ENCODE measurements at regions of chr7 and their contacts with region 1.

Region 1: DNA sequence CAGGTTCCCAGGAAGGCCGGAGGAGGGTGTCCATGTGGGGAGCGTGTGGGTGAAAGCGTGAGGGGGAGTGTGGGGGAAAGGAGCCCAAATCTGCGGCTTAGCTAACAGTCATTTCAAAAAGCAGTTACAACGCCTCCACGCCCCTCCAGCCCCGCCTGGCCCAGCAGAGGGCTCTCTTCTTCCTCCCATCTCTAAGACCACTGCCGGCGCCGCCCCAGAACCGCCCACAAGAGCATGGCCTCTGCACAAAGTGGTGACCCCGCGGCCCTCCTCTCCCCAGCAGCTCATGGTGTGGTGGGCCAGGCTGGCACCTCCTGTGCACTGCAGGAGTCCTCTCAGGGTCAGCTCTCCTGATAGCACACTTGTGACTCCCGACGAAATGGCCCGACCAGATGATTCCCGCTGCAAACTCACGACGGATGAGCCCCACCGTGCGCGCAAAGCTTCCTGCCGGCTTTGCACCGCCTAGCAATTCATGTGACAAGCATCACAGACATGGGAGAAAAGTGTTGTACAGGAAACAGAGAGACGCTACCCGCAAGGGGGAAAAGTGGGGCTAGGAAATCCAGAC is 12.4 kb upstream of the HUS1 start:
- DNase-seq: no peak
- H3K4me3 ChIP-seq: peak overlapping the region; percentile 63
- CTCF ChIP-seq: peak; percentile 86

Region 2: DNA sequence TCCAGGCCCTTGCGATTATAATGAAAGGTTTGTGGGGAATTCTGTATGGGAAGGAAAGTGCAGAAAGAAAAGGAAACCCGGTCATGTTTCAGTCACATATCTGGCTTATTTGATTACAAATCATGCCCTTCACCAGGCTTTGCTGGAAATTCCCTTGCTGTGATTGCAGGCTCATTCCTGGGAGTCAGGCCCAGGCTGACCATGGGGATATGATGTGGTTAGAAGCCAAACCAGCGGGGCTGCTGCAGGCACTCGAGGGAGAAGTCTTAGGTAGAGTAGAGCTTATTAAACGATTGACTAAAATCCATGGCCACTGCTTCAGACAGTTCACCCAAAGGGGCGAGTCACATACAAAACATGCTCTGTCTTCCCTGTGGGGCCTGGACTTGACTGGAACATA is 59.8 kb before region 1 on chr7:
- CTCF ChIA-PET with region 1: no interaction called
- POLR2A ChIA-PET with region 1: no interaction called
- DNase-seq: no peak
- H3K4me3 ChIP-seq: no peak overlapping the region
- CTCF ChIP-seq: no peak

Region 3: DNA sequence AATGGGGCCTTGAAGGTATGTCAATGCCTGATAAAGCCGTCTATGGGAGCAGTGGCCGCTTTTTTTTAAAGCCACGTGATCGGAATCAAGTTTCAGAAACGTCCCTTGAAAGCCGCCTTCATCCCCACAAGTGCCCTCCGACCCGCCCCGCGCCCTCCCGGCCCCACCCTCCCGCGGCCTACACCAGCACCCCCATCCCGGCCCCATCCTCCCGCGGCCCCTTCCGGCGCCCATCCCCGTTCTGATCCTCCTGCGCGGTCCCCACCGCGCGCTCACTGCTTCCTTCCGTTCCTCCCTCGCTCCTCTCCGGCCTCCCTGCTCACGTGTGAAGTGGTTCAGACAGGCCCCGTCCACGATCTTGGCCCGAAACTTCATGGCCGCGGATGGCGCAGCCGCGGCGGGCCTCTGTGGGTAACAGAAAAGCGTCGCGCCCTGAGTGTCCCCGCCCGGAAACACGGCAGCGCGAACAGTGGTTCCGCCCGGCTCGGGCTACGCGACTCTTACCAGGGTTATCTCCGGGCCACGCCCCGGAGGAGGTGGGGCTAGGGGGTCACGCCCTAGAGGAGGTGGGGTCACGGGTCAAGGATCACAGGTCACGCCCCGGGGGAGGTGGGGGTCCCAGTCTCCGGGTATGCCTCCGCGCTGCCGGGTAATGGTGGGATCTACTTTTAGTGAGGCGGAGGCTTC is 12.5 kb before region 1 on chr7 and contains the start of gene HUS1:
- CTCF ChIA-PET with region 1: interaction called, 14 read pairs
- POLR2A ChIA-PET with region 1: no interaction called
- DNase-seq: no peak
- H3K4me3 ChIP-seq: peak within 1 kb of the TSS; percentile 78
- CTCF ChIP-seq: no peak

Region 4: DNA sequence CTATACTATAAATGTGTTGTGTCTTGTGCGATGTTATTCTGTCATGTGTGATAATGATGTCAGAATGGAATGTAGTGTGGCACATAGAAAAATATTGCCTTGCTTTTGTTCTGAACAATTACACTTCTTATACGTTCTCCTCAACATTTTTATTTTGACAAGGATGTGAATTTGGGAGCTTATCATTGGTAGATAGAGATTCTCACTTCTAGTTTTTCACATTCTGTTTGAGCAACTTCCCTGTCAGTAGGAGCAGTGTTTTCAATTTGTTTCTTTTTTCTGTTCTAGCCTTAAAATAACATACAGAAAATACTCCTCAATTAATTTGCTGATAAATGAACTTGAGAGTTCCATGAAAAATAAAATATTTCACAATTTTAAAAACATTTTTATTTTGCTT is 19.5 kb after region 1 on chr7:
- CTCF ChIA-PET with region 1: interaction called, 10 read pairs
- POLR2A ChIA-PET with region 1: no interaction called
- DNase-seq: no peak
- H3K4me3 ChIP-seq: no peak overlapping the region
- CTCF ChIP-seq: no peak

Region 5: DNA sequence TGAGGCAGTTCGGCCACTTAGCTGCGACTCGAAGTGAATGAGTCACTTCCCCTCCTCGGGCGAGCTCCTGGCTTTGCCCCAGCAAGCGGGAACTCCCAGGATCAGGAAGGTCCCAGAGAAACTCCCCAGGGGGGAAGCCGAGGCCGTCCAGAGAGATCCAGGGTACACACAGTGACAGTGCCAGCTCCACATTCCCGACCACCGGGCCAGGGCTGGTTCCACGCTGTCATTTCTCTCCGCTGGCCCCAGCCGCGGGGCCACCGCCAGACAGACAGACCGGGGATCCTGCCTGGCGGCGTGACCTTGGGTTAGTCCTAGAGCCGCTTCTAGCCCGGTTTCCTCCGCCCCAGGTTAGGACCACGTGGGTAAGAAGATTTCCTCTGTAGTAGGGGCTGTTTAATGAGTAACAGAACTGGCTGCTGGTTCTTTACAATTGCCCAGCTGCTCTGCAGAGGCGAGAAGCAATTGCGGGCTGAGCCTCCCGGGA is 96.8 kb after region 1 on chr7:
- CTCF ChIA-PET with region 1: interaction called, 10 read pairs
- POLR2A ChIA-PET with region 1: no interaction called
- DNase-seq: peak; percentile 72
- H3K4me3 ChIP-seq: peak overlapping the region; percentile 78
- CTCF ChIP-seq: no peak

Region 6: GRCh38 chr7:48118041-48118440 is 126.2 kb after region 1 on chr7:
- CTCF ChIA-PET with region 1: interaction called, 320 read pairs
- POLR2A ChIA-PET with region 1: no interaction called
- DNase-seq: no peak
- H3K4me3 ChIP-seq: no peak overlapping the region
- CTCF ChIP-seq: no peak

Region 7: DNA sequence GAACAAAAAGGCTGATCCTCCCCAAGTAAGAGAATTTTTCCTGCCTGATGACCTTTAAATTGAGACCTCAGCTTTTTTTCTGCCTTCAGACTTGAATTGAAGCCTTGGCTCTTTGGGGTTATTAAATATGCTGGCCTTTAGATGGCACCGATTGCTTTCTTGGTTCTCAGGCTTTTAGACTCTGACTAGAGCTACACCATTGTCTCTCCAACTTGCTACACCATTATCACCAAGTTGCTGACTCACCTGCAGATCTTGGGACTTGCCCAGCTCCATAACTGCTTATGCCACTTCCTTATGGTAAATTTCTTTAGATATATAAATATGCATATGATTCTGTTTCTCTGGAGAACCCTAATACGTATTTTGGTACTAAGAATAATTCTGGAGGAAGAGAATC is 176.3 kb after region 1 on chr7:
- CTCF ChIA-PET with region 1: no interaction called
- POLR2A ChIA-PET with region 1: no interaction called
- DNase-seq: no peak
- H3K4me3 ChIP-seq: no peak overlapping the region
- CTCF ChIP-seq: no peak

Region 8: DNA sequence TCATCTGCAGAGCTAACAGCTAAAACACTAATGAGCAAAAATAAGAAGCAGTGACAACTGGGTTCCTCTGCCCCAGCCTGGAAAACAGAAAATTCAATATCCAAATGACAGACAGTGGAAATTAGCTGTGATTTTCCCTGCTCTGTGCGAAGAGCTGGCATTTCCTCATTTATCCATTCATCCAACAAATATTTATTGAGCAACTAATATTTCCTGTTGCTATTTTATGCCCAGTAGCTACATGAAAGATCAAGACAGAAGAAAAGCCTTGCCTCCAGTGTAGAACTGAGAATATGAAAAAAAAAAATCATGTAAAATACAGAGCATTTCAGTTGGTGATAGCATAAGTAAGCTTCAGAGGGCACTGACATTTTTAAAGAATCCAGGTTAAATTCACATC is 320.3 kb after region 1 on chr7:
- CTCF ChIA-PET with region 1: no interaction called
- POLR2A ChIA-PET with region 1: no interaction called
- DNase-seq: no peak
- H3K4me3 ChIP-seq: no peak overlapping the region
- CTCF ChIP-seq: no peak